Activated CD4-positive, alpha-beta T cell treated with anti-CD3 and anti-CD28 coated beads for 36 hours (primary cell): ENCODE measurements at regions of chr9 and their contacts with region 1.

Region 1: GRCh38 chr9:125650271-125650737 is 56.7 kb downstream of the MAPKAP1 start:
- DNase-seq: peak; percentile 39
- ATAC-seq: peak; percentile 89
- H3K4me3 Mint-ChIP-seq: peak overlapping the region; percentile 55
- H3K27ac Mint-ChIP-seq: peak overlapping the region; percentile 87
- H3K4me1 Mint-ChIP-seq: peaks cover 71% of the 10 kb centered on the region
- H3K27me3 Mint-ChIP-seq: no peaks in the 10 kb centered on the region

Region 2: DNA sequence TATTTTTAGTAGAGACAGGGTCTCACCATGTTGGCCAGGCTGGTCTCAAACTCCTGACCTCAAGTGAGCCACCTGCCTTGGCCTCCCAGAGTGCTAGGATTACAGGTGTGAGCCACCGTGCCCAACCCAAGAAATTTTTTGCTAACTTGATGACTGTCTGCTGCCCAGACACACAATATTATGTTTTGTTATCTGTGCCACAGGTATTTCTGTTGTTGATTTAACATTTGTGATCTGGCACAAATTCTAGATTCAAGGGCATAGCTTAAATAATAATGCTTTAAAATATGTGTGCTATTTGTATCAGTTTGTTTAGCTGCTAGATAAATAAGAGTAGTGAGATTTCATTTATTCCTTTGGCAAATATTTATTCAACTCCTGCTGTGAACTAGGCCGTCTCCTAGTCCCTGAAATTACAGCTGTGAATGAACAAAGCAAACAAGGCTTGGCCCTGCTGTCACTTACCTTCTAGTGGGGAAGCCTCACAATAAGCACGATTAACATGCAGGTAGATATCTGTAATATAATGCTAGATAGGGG is 353.4 kb before region 1 on chr9:
- CTCF ChIA-PET with region 1: no interaction called
- POLR2A ChIA-PET with region 1: no interaction called
- intact Hi-C with region 1: no loop called
- DNase-seq: no peak
- ATAC-seq: no peak
- H3K4me3 Mint-ChIP-seq: no peak overlapping the region
- H3K27ac Mint-ChIP-seq: peak overlapping the region; percentile 2
- H3K4me1 Mint-ChIP-seq: peaks cover 2% of the 10 kb centered on the region
- H3K27me3 Mint-ChIP-seq: no peaks in the 10 kb centered on the region

Region 3: DNA sequence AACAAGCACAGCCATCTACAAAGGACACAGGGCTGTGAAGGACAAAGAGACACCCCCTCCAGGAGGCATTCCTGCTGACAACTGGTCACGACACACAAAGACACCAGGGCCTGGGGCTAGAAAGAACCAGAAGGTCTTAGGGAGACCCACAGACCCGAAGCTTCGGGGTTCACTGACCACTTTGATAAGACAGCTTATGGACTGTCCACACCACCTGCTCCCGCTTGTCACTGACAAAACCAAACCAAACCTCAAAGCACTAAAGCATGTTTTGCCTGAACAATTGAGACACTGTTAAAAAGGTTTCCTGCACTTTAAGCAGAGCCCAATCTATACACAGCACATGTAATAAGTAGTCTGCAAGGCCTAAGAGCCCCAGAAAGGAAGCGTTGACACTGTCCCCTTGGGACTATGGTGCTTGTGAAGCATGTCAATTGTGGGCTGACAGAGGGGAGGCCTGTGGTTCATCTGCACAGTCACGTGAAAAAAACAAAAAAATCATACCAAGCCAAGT is 203.7 kb before region 1 on chr9:
- CTCF ChIA-PET with region 1: no interaction called
- POLR2A ChIA-PET with region 1: no interaction called
- intact Hi-C with region 1: no loop called
- DNase-seq: no peak
- ATAC-seq: no peak
- H3K4me3 Mint-ChIP-seq: no peak overlapping the region
- H3K27ac Mint-ChIP-seq: no peak overlapping the region
- H3K4me1 Mint-ChIP-seq: no peaks in the 10 kb centered on the region
- H3K27me3 Mint-ChIP-seq: no peaks in the 10 kb centered on the region

Region 4: GRCh38 chr9:125663127-125663526 is 12.8 kb after region 1 on chr9:
- CTCF ChIA-PET with region 1: no interaction called
- POLR2A ChIA-PET with region 1: interaction called, 3 read pairs
- intact Hi-C with region 1: loop called (anchors 1 kb)
- DNase-seq: no peak
- ATAC-seq: peak; percentile 80
- H3K4me3 Mint-ChIP-seq: no peak overlapping the region
- H3K27ac Mint-ChIP-seq: peak overlapping the region; percentile 39
- H3K4me1 Mint-ChIP-seq: peaks cover 11% of the 10 kb centered on the region
- H3K27me3 Mint-ChIP-seq: no peaks in the 10 kb centered on the region

Region 5: GRCh38 chr9:125700791-125701190 is 50.5 kb after region 1 on chr9:
- CTCF ChIA-PET with region 1: no interaction called
- POLR2A ChIA-PET with region 1: no interaction called
- intact Hi-C with region 1: loop called (anchors 1 to 5 kb)
- DNase-seq: peak; percentile 70
- ATAC-seq: peak; percentile 91
- H3K4me3 Mint-ChIP-seq: no peak overlapping the region
- H3K27ac Mint-ChIP-seq: no peak overlapping the region
- H3K4me1 Mint-ChIP-seq: peaks cover 65% of the 10 kb centered on the region
- H3K27me3 Mint-ChIP-seq: no peaks in the 10 kb centered on the region